ENCODE measurements at regions of chr11 and their contacts with region 1.

Region 1: DNA sequence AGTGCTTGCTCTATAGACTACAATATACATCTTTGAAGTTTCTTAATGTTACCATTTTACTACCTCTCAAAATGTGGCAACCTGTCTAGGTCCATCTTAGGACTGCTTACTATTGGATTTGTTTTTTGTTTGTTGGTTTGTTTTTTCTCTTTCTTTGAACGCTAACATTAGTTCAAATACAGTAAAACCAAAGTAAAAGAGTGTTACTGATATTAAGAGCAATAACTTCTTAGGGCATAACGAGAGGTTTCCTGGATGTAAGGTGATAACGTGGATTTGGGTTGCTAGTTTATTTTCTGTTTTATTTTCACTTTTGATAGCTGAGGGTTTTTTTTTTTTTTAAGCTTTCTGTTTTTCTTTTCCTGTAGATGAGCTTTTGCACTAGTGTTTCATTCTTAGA is 43.6 kb downstream of the TMEM135 start:
- DNase-seq: no peak
- H3K4me3 Mint-ChIP-seq: peak overlapping the region; percentile 68
- H3K27ac Mint-ChIP-seq: peak overlapping the region; percentile 65
- H3K4me1 Mint-ChIP-seq: peaks cover 19% of the 10 kb centered on the region
- H3K27me3 Mint-ChIP-seq: no peaks in the 10 kb centered on the region

Region 2: DNA sequence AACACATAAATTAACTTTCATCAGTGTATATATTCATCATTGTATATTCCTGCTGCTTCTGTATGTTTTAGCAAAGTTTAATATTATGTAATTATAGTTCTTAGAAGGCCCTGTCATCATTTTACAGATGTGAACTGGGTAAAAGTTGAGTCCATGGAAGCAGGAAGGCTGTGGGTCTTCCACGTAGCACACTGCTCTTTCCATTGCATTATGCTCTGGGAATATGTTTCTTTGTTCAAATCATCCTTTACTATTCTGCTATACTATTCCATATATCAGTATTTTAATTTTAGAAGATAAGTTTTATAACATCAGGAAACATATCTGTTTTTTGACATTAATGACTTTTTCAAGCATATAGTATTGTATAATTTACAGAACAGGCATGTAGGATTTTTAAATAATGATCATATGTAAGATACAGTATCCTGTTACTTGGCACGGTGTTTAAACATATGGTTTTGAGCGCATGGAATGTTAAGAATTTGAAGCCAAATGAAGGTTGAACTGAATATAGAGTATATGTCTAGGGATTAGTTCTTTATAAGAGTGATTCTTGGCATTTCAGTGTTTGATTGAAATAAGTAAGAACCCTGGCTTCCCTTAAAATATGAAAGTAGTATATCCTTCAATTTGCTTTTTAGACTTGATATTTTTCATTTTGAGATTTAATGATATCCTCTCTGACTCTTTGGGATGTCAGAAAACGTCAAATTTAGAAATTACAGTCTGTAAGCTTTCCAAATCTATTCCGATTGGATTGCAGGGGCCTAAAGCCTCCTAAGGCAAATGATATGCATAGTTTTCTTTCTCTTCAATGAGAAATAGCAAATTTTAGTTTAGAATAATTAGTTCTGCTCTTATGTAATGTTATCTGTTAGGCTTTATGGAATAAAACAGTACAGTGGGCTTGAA is 698.1 kb before region 1 on chr11:
- CTCF ChIA-PET with region 1: no interaction called
- intact Hi-C with region 1: no loop called
- DNase-seq: no peak
- H3K4me3 Mint-ChIP-seq: no peak overlapping the region
- H3K27ac Mint-ChIP-seq: no peak overlapping the region
- H3K4me1 Mint-ChIP-seq: no peaks in the 10 kb centered on the region
- H3K27me3 Mint-ChIP-seq: no peaks in the 10 kb centered on the region

Region 3: GRCh38 chr11:87213444-87213843 is 132.1 kb after region 1 on chr11:
- CTCF ChIA-PET with region 1: no interaction called
- intact Hi-C with region 1: loop called (anchors 1 kb)
- DNase-seq: no peak
- H3K4me3 Mint-ChIP-seq: no peak overlapping the region
- H3K27ac Mint-ChIP-seq: no peak overlapping the region
- H3K4me1 Mint-ChIP-seq: peaks cover 8% of the 10 kb centered on the region
- H3K27me3 Mint-ChIP-seq: no peaks in the 10 kb centered on the region

Measured in activated naive CD4-positive, alpha-beta T cell treated with anti-CD3 and anti-CD28 coated beads for 36 hours (primary cell).